PC-3 (cell line): ENCODE measurements at regions of chr7 and their contacts with region 1.

Region 1: GRCh38 chr7:156892821-156893706 is at the start of gene LMBR1:
- DNase-seq: peak; percentile 90
- ATAC-seq: peak; percentile 85
- H3K4me3 ChIP-seq: peak within 1 kb of the TSS; percentile 96
- H3K27ac ChIP-seq: peak within 1 kb of the TSS; percentile 48
- H3K4me1 ChIP-seq: peaks cover 4% of the 10 kb centered on the region; the same call in 1 of the 2 replicates
- H3K27me3 ChIP-seq: no peaks in the 10 kb centered on the region
- CTCF ChIP-seq: peak; percentile 25; the same call in 1 of the 2 replicates
- total RNA-seq, gene LMBR1: 61.7 and 63.9 TPM in 2 replicates

Region 2: GRCh38 chr7:156437998-156438397 is 455.1 kb before region 1 on chr7:
- CTCF ChIA-PET with region 1: no interaction called
- POLR2A ChIA-PET with region 1: interaction called, 10 read pairs
- intact Hi-C with region 1: no loop called
- DNase-seq: no peak
- ATAC-seq: no peak
- H3K4me3 ChIP-seq: no peak overlapping the region
- H3K27ac ChIP-seq: no peak overlapping the region
- H3K4me1 ChIP-seq: no peaks in the 10 kb centered on the region
- H3K27me3 ChIP-seq: peaks cover 80% of the 10 kb centered on the region
- CTCF ChIP-seq: no peak

Region 3: GRCh38 chr7:156845379-156846101 is 47.5 kb before region 1 on chr7:
- CTCF ChIA-PET with region 1: no interaction called
- POLR2A ChIA-PET with region 1: no interaction called
- intact Hi-C with region 1: loop called (anchors 5 kb)
- DNase-seq: peak; percentile 55
- ATAC-seq: peak; percentile 66
- H3K4me3 ChIP-seq: no peak overlapping the region
- H3K27ac ChIP-seq: peak overlapping the region; percentile 35
- H3K4me1 ChIP-seq: peaks cover 14% of the 10 kb centered on the region
- H3K27me3 ChIP-seq: no peaks in the 10 kb centered on the region
- CTCF ChIP-seq: no peak

Region 4: GRCh38 chr7:157138424-157139110 is 245.5 kb after region 1 on chr7 and contains the start of gene UBE3C:
- CTCF ChIA-PET with region 1: no interaction called
- POLR2A ChIA-PET with region 1: no interaction called
- intact Hi-C with region 1: loop called (anchors 5 kb)
- DNase-seq: peak; percentile 88
- ATAC-seq: peak; percentile 84
- H3K4me3 ChIP-seq: peak within 1 kb of the TSS; percentile 93
- H3K27ac ChIP-seq: peak within 1 kb of the TSS; percentile 58
- H3K4me1 ChIP-seq: peaks cover 31% of the 10 kb centered on the region
- H3K27me3 ChIP-seq: no peaks in the 10 kb centered on the region
- CTCF ChIP-seq: no peak
- total RNA-seq, gene UBE3C: 83.1 and 86.6 TPM in 2 replicates